Astrocyte of the cerebellum (primary cell): ENCODE measurements at regions of chr2 and their contacts with region 1.

Region 1: GRCh38 chr2:98664327-98664726 is 55.9 kb downstream of the UNC50 start:
- DNase-seq: no peak
- H3K4me3 ChIP-seq: no peak overlapping the region
- CTCF ChIP-seq: no peak

Region 2: DNA sequence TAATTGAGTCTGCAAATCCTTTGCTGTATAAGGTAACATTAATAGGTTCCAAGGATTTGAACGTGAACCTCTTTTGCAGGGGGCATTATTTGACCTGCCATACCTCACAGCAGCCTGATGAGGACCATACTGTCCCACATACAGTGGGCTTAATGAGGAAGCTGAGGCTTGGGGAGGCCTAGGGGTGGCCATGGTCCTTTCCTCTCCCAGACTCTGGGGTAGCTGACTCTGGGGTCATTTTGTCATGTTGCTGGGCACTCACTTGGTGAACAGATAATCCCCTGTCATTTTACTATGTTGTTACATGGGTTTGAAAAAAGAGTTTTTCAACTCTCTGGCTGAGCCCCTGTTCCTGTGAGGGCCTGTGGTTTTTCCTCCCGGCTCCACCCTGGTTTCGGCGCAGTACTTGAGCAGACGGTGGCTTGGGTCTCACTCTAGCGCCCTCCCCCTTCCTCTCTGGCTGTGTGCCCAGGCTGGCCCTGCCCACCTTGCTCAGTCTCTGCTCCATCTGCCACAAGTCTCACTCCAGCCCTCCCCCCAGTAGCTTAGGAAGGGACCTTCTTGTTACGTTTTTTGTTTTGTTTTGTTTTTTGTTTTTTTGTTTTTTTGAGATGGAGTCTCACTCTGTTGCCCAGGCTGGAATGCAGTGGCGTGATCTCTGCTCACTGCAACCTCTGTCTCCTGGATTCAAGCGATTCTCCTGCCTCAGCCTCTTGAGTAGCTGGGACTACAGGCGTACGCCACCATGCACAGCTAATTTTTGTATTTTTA is 198.7 kb before region 1 on chr2:
- in situ Hi-C with region 1: no loop called
- DNase-seq: no peak
- H3K4me3 ChIP-seq: no peak overlapping the region
- CTCF ChIP-seq: no peak

Region 3: DNA sequence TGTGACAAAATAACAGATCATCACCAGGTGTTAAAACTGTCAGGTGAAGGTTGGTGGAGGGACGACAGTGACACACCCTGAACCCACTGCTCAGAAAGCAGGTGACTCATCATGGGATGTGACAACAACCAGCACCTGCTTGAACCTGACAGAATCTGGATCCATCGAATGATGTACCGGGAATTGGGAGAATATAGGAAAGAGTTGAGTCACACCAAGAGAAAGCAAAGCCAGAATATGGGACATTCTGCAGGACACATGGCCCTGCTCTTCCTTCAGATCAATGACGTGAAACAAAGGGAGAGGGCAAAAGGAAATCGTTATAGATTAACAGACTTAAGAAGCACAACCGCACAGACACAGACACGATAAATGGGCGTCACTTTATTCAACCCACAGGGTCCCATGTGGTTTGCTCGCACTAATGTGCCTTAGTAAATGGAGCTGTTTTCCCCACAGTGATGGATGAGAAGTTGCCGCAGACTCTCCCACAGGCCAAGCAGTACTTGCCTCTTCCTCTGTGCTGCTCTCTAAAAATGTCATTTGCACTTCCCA is 171.6 kb after region 1 on chr2:
- in situ Hi-C with region 1: loop called (anchors 25 kb)
- DNase-seq: no peak
- H3K4me3 ChIP-seq: no peak overlapping the region
- CTCF ChIP-seq: no peak